ENCODE measurements at regions of chr1 and their contacts with region 1.

Region 1: GRCh38 chr1:85692730-85693314 is 15.4 kb downstream of the ZNHIT6 start:
- DNase-seq: peak; percentile 60
- H3K4me3 ChIP-seq: no peak overlapping the region
- H3K27ac ChIP-seq: peak overlapping the region; percentile 38
- H3K4me1 ChIP-seq: peaks cover 7% of the 10 kb centered on the region
- H3K27me3 ChIP-seq: no peaks in the 10 kb centered on the region
- CTCF ChIP-seq: peak; percentile 22 to 26
- POLR2A ChIP-seq: no peak

Region 2: GRCh38 chr1:84944767-84945486 is 747.9 kb before region 1 on chr1:
- CTCF ChIA-PET with region 1: interaction called, 24 read pairs
- POLR2A ChIA-PET with region 1: no interaction called
- dilution Hi-C with region 1: no loop called
- intact Hi-C with region 1: no loop called
- DNase-seq: peak; percentile 90
- H3K4me3 ChIP-seq: peak overlapping the region; percentile 37 to 72 (median 68)
- H3K27ac ChIP-seq: peak overlapping the region; percentile 20
- H3K4me1 ChIP-seq: peaks cover 5% of the 10 kb centered on the region
- H3K27me3 ChIP-seq: peaks cover 9 to 15% of the 10 kb centered on the region in 2 experiments
- CTCF ChIP-seq: peak; percentile 68 to 83
- POLR2A ChIP-seq: no peak

Region 3: GRCh38 chr1:85276215-85276977 is 416.4 kb before region 1 on chr1 and contains the start of gene BCL10:
- CTCF ChIA-PET with region 1: interaction called, 10 read pairs
- POLR2A ChIA-PET with region 1: no interaction called
- dilution Hi-C with region 1: no loop called
- intact Hi-C with region 1: no loop called
- DNase-seq: peak; percentile 99
- H3K4me3 ChIP-seq: peak within 1 kb of the TSS; percentile 95 to 99 (median 98)
- H3K27ac ChIP-seq: peak within 1 kb of the TSS; percentile 100
- H3K4me1 ChIP-seq: peaks cover 56% of the 10 kb centered on the region
- H3K27me3 ChIP-seq: no peaks in the 10 kb centered on the region
- CTCF ChIP-seq: no peak
- POLR2A ChIP-seq: peak; percentile 64
- total RNA-seq, gene BCL10: 74.5 and 78.6 TPM in 2 replicates

Region 4: DNA sequence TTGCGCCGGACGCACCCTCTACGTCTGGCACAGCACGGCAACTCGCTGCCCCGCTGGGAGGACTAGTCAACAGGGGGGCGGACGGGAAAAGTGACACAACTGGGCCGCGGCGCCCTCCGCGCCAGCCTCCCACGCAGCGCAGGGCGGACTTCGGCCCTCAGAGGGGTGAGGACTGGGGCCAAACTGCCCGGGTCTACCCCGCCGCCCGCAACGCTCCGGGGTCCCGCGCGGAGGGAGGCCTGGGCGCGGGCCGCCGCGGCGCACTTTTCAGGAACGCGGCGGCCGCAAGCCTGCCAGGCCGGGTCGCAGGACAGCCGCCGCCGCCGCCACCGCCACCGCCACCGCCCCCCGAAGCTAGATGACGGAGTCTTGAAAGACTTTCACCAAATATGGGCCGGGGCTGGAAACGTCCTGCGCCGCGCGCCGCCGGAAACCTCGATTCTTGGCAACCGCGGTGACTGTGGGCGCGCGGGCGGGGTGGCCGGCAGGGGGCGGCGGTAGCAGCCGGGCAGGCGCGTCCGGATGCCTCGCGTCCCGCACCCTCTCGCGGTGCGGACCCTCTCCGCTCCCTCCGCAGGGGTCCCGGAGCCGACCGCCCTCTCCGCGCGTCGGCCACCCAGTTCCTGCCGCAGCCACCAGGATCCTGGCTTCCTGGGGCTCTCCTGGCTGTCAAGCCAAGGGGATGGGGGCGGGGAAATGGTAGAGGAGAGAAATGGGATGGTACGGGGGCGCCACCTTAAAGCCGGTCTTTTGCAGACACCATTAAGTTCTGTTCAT is 116.0 kb before region 1 on chr1:
- CTCF ChIA-PET with region 1: interaction called, 11 read pairs
- POLR2A ChIA-PET with region 1: no interaction called
- dilution Hi-C with region 1: no loop called
- intact Hi-C with region 1: no loop called
- DNase-seq: peak; percentile 87
- H3K4me3 ChIP-seq: peak overlapping the region; percentile 67 to 93 (median 80)
- H3K27ac ChIP-seq: peak overlapping the region; percentile 98
- H3K4me1 ChIP-seq: peaks cover 55% of the 10 kb centered on the region
- H3K27me3 ChIP-seq: no peaks in the 10 kb centered on the region
- CTCF ChIP-seq: peak; percentile 69 to 83
- POLR2A ChIP-seq: peak; percentile 17

Region 5: GRCh38 chr1:85607126-85607912 is 85.5 kb before region 1 on chr1:
- CTCF ChIA-PET with region 1: interaction called, 16 read pairs
- POLR2A ChIA-PET with region 1: no interaction called
- dilution Hi-C with region 1: no loop called
- intact Hi-C with region 1: loop called (anchors 2 kb)
- DNase-seq: peak; percentile 91
- H3K4me3 ChIP-seq: peak overlapping the region in 1 of 3 experiments; percentile 4
- H3K27ac ChIP-seq: peak overlapping the region; percentile 85
- H3K4me1 ChIP-seq: peaks cover 27% of the 10 kb centered on the region
- H3K27me3 ChIP-seq: no peaks in the 10 kb centered on the region
- CTCF ChIP-seq: no peak
- POLR2A ChIP-seq: peak; percentile 76

Region 6: DNA sequence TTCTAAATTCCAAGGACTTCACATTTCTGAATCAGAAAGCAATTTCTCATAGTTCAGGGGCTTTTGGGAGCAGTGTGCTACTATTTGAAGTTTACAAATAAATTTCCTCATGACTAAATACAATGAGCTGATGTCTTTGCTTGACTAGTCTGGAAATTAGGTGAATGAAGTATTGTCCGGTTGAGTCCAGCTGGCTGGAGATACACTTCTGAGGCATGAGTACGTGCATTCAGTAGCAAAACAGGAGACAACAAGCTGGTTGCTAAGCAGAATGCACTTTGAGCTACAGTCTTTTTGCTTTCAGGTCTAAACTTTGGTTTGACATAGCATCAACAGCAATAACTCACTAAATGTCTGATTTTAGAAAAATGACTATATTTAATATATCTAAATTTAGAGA is 11.7 kb before region 1 on chr1:
- CTCF ChIA-PET with region 1: interaction called, 18 read pairs
- POLR2A ChIA-PET with region 1: no interaction called
- dilution Hi-C with region 1: no loop called
- intact Hi-C with region 1: no loop called
- DNase-seq: peak; percentile 45
- H3K4me3 ChIP-seq: no peak overlapping the region
- H3K27ac ChIP-seq: no peak overlapping the region
- H3K4me1 ChIP-seq: no peaks in the 10 kb centered on the region
- H3K27me3 ChIP-seq: no peaks in the 10 kb centered on the region
- CTCF ChIP-seq: no peak
- POLR2A ChIP-seq: no peak

Region 7: DNA sequence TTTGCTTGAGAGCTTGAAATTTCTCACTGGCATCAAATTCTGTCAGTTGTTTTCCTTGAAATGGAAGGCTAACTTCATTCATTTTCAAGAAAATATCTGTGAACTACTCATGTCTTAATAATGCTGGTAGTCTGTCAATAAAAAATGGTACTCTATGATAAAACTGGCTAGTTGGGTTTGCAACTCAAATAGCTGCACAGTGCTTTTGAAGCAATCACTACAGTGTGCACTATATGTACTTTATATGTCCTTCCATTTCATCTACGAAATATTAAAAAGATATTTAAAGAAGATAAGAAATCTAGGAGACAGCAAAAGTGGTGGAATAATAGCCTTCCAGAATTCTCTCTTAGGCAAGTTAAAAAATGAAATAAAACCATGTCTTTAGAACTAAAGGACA is 55.3 kb after region 1 on chr1:
- CTCF ChIA-PET with region 1: no interaction called
- POLR2A ChIA-PET with region 1: no interaction called
- dilution Hi-C with region 1: no loop called
- intact Hi-C with region 1: no loop called
- DNase-seq: no peak
- H3K4me3 ChIP-seq: no peak overlapping the region
- H3K27ac ChIP-seq: no peak overlapping the region
- H3K4me1 ChIP-seq: no peaks in the 10 kb centered on the region
- H3K27me3 ChIP-seq: peaks cover 3 to 4% of the 10 kb centered on the region in 2 experiments
- CTCF ChIP-seq: no peak
- POLR2A ChIP-seq: no peak

Measured in endothelial cell of umbilical vein (primary cell).